Activated CD4-positive, alpha-beta T cell treated with anti-CD3 and anti-CD28 coated beads for 36 hours (primary cell): ENCODE measurements at regions of chr1 and their contacts with region 1.

Region 1: GRCh38 chr1:226444901-226445300 is 37.0 kb upstream of the PARP1 start:
- DNase-seq: peak; percentile 77
- ATAC-seq: peak; percentile 99
- H3K4me3 Mint-ChIP-seq: no peak overlapping the region
- H3K27ac Mint-ChIP-seq: no peak overlapping the region
- H3K4me1 Mint-ChIP-seq: peaks cover 32% of the 10 kb centered on the region
- H3K27me3 Mint-ChIP-seq: no peaks in the 10 kb centered on the region

Region 2: DNA sequence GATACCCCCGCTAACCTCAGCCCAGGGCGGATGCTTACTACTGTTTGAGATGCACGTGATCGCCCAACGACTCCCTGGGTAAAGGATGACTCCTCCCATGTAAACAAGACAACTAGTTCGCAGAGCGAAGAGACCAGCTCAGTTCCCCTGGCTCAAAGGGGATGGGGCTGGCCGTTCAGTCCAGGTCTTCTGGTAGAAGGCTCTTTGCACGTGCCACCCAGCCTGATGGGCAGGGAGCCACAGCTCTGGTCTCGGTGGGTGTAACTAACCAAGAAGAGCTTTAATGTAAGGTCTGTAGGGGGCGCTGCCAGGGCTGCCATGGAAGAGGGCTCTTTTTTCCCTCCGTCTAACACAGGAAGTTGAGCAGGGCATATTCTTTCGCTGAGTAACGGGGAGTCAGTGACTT is 12.4 kb after region 1 on chr1:
- CTCF ChIA-PET with region 1: interaction called, 14 read pairs
- POLR2A ChIA-PET with region 1: no interaction called
- intact Hi-C with region 1: no loop called
- DNase-seq: peak; percentile 79
- ATAC-seq: peak; percentile 93
- H3K4me3 Mint-ChIP-seq: peak overlapping the region; percentile 55
- H3K27ac Mint-ChIP-seq: peak overlapping the region; percentile 76
- H3K4me1 Mint-ChIP-seq: peaks cover 12% of the 10 kb centered on the region
- H3K27me3 Mint-ChIP-seq: no peaks in the 10 kb centered on the region

Region 3: DNA sequence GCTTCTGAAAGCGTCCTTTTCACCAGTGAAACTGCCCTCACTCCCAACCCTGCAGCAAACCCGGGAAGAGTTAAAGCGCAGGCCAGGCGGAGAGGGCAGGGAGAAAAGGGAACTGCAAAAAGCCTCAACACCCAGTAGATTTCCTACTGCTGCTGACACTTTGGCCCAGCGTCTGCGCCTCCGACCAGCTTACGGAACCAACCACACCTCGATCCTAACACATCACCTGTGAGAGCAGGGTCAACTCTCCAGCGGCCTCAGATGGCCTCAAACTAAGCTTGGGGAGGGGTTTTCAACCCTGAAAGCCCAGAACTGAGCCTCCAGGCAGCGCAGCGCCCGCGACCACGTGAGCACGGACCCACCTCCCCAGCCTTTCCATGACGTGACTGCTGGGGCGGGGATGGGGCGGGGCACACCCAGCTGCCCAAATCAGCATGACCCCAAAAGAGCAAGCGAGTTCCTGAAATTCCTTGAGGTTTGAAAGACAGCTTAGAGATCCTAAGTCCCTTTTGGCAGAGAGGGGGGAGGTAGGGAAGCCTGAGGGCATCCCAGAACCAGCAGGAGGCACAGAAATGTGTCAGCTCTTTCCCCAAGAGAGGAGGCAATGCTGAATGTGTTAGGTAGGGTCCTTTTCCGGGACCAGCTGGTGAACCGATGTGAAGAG is 235.1 kb after region 1 on chr1:
- CTCF ChIA-PET with region 1: no interaction called
- POLR2A ChIA-PET with region 1: no interaction called
- intact Hi-C with region 1: no loop called
- DNase-seq: peak; percentile 89
- ATAC-seq: peak; percentile 20
- H3K4me3 Mint-ChIP-seq: peak overlapping the region; percentile 67
- H3K27ac Mint-ChIP-seq: peak overlapping the region; percentile 95
- H3K4me1 Mint-ChIP-seq: peaks cover 99% of the 10 kb centered on the region
- H3K27me3 Mint-ChIP-seq: no peaks in the 10 kb centered on the region

Region 4: GRCh38 chr1:226702957-226703831 is 258.3 kb after region 1 on chr1:
- CTCF ChIA-PET with region 1: no interaction called
- POLR2A ChIA-PET with region 1: no interaction called
- intact Hi-C with region 1: no loop called
- DNase-seq: peak; percentile 90
- ATAC-seq: peak; percentile 61
- H3K4me3 Mint-ChIP-seq: peak overlapping the region; percentile 84
- H3K27ac Mint-ChIP-seq: peak overlapping the region; percentile 97
- H3K4me1 Mint-ChIP-seq: peaks cover 85% of the 10 kb centered on the region
- H3K27me3 Mint-ChIP-seq: no peaks in the 10 kb centered on the region